Activated CD4-positive, alpha-beta memory T cell treated with anti-CD3 and anti-CD28 coated beads for 36 hours (primary cell): ENCODE measurements at regions of chr17 and their contacts with region 1.

Region 1: DNA sequence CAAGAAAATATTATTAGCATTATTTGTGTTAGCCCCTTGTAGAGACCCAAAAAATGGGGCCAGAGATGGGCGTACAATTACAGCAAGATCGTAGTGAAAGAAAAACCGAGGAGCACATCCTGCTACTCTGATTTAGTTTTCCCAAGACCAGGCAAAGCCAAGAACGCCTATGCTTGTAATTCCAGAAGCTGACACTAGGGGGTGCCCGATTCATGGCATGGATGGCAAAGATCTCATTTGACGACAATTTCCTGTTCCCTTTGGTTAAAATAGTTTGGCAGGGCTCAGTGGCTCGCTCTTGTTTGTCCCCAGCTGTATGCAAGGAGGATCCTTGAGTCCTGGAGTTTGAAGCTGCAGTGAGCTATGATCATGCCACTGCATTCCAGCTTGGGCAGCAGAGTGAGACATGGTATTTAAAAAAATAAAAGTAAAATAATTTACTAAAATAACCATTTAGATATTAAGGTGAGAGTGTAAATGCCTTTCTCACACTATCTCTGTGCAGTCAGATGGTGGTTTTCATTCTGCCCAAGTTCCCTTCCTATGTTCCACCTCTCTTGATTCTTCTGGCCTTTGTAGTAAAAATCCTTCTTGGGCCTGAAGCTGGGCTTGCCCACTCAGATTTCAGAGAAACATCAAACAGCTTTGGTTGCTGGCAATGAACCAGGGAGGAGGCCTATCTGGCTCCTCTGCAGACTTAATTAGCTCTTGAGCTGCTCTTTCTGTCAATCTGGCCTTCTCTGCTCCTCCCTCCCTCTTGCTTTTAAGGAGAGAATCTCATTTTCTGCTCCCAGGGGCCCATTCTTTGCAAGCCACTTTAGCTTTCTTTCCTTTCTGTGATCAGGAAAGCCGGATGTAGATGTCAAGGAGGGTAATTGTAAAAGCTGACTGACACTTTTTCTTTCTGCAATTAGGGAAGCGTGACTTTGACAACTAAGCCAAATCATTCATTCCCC is 31.2 kb downstream of the TMEM238L start:
- DNase-seq: peak; percentile 60
- H3K4me3 Mint-ChIP-seq: no peak overlapping the region
- H3K27ac Mint-ChIP-seq: no peak overlapping the region
- H3K4me1 Mint-ChIP-seq: no peaks in the 10 kb centered on the region
- H3K27me3 Mint-ChIP-seq: no peaks in the 10 kb centered on the region

Region 2: GRCh38 chr17:10741416-10742135 is 31.1 kb before region 1 on chr17:
- CTCF ChIA-PET with region 1: no interaction called
- POLR2A ChIA-PET with region 1: no interaction called
- intact Hi-C with region 1: no loop called
- DNase-seq: no peak
- H3K4me3 Mint-ChIP-seq: no peak overlapping the region
- H3K27ac Mint-ChIP-seq: no peak overlapping the region
- H3K4me1 Mint-ChIP-seq: peaks cover 12% of the 10 kb centered on the region
- H3K27me3 Mint-ChIP-seq: no peaks in the 10 kb centered on the region

Region 3: GRCh38 chr17:10754109-10754508 is 18.6 kb before region 1 on chr17:
- CTCF ChIA-PET with region 1: interaction called, 13 read pairs
- POLR2A ChIA-PET with region 1: no interaction called
- intact Hi-C with region 1: no loop called
- DNase-seq: peak; percentile 34
- H3K4me3 Mint-ChIP-seq: no peak overlapping the region
- H3K27ac Mint-ChIP-seq: no peak overlapping the region
- H3K4me1 Mint-ChIP-seq: no peaks in the 10 kb centered on the region
- H3K27me3 Mint-ChIP-seq: peaks cover 2% of the 10 kb centered on the region

Region 4: GRCh38 chr17:10761281-10761680 is 11.4 kb before region 1 on chr17:
- CTCF ChIA-PET with region 1: interaction called, 11 read pairs
- POLR2A ChIA-PET with region 1: no interaction called
- intact Hi-C with region 1: no loop called
- DNase-seq: no peak
- H3K4me3 Mint-ChIP-seq: no peak overlapping the region
- H3K27ac Mint-ChIP-seq: no peak overlapping the region
- H3K4me1 Mint-ChIP-seq: no peaks in the 10 kb centered on the region
- H3K27me3 Mint-ChIP-seq: no peaks in the 10 kb centered on the region

Region 5: DNA sequence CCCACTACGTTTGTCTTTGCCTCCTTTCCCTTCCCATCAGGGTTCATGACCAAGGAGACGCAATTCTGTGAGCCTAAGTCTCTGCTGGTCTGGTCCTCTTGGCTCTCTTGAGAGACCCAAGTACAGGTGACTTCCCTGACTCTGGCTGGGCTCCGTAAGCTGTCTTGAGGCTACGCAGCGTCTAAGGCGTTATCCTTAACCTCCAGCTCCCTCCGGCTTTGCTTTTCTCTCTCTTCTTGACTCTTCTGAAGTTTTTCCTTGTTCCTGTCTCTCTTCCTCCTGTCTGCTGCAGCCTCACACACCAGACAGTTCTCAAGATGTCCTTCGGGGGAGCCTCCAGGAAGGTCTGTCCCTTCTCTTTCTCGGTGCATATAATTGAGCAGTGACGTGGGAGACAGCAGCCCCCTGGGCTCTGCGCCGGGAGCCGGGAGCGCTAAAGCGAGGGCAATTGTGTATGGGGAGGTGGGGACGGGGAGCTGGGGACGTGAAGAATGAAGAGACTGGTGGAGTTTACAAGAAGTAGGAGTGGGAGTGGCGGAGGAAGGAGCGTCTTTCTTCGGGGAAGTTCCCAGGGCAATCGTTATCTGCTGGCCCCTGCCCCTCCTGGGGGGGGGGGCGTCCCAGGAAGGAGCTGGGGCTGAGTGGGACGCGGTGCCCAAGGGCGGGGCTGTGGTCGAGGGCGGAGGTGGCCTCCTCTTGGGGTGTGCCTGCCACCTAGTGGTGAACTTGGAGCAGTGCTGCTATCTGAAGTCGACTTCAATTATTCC is 72.1 kb after region 1 on chr17:
- CTCF ChIA-PET with region 1: interaction called, 15 read pairs
- POLR2A ChIA-PET with region 1: no interaction called
- intact Hi-C with region 1: loop called (anchors 1 kb)
- DNase-seq: peak; percentile 79
- H3K4me3 Mint-ChIP-seq: peak overlapping the region; percentile 73
- H3K27ac Mint-ChIP-seq: no peak overlapping the region
- H3K4me1 Mint-ChIP-seq: peaks cover 7% of the 10 kb centered on the region
- H3K27me3 Mint-ChIP-seq: peaks cover 8% of the 10 kb centered on the region